ENCODE measurements at regions of chr19 and their contacts with region 1.

Region 1: DNA sequence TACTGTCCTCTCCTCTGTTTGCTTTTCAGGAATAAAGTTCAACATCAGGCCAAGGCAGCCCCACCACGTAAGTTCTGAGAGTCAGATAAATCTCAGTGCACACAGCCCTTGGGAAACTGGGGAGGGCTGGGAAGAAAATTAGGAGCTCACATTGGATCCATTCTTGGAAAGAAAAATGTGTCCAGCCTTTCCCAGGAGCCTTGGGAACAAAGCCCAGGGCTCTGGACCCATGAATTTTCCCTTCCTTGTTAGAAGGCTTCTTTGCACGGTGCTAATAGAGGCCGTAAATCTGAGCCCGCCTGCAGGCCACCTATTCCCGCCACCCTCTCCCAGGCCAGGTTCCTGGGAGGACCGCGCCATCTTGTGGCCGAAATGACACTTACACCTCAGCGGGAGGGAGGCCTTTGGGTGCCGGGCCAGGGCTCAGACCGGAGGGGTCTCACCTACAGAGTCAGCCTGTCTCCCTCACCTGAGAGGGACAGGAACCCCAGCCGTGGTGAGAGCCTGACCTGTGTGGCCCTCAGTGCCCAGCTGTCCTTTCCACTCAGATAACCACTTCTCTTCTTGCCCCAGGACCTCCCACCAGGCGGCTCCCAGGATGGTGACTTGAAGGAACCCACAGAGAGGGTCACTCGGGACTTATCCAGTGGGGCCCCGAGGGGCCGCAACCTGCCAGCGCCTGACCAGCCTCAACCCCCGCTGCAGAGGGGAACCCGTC is 25.1 kb upstream of the KCTD15 start:
- DNase-seq: peak; percentile 70 to 81 (median 75)
- ATAC-seq: peak; percentile 76
- H3K4me3 ChIP-seq: no peak overlapping the region
- H3K27ac ChIP-seq: no peak overlapping the region
- H3K4me1 ChIP-seq: no peaks in the 10 kb centered on the region
- H3K27me3 ChIP-seq: no peaks in the 10 kb centered on the region
- CTCF ChIP-seq: peak; percentile 71 to 93 (median 85)
- POLR2A ChIP-seq: no peak

Region 2: GRCh38 chr19:33235269-33235995 is 536.1 kb before region 1 on chr19:
- intact Hi-C with region 1: loop called (anchors 10 kb)
- DNase-seq: peak; percentile 78 to 90 (median 83)
- ATAC-seq: peak; percentile 71
- H3K4me3 ChIP-seq: no peak overlapping the region
- H3K27ac ChIP-seq: no peak overlapping the region
- H3K4me1 ChIP-seq: no peaks in the 10 kb centered on the region
- H3K27me3 ChIP-seq: no peaks in the 10 kb centered on the region
- CTCF ChIP-seq: peak; percentile 80 to 87 (median 85)
- POLR2A ChIP-seq: no peak

Region 3: GRCh38 chr19:33416307-33417215 is 355.0 kb before region 1 on chr19:
- intact Hi-C with region 1: loop called (anchors 5 kb)
- DNase-seq: peak; percentile 45 to 79 (median 60)
- ATAC-seq: peak; percentile 53
- H3K4me3 ChIP-seq: no peak overlapping the region
- H3K27ac ChIP-seq: no peak overlapping the region
- H3K4me1 ChIP-seq: no peaks in the 10 kb centered on the region
- H3K27me3 ChIP-seq: no peaks in the 10 kb centered on the region
- CTCF ChIP-seq: peak; percentile 38 to 56 (median 47)
- POLR2A ChIP-seq: no peak

Region 4: GRCh38 chr19:33430674-33431277 is 340.8 kb before region 1 on chr19:
- intact Hi-C with region 1: loop called (anchors 5 kb)
- DNase-seq: peak; percentile 65 to 74 (median 70)
- ATAC-seq: peak; percentile 80
- H3K4me3 ChIP-seq: no peak overlapping the region
- H3K27ac ChIP-seq: no peak overlapping the region
- H3K4me1 ChIP-seq: no peaks in the 10 kb centered on the region
- H3K27me3 ChIP-seq: no peaks in the 10 kb centered on the region
- CTCF ChIP-seq: peak; percentile 63 to 74 (median 67)
- POLR2A ChIP-seq: no peak

Region 5: DNA sequence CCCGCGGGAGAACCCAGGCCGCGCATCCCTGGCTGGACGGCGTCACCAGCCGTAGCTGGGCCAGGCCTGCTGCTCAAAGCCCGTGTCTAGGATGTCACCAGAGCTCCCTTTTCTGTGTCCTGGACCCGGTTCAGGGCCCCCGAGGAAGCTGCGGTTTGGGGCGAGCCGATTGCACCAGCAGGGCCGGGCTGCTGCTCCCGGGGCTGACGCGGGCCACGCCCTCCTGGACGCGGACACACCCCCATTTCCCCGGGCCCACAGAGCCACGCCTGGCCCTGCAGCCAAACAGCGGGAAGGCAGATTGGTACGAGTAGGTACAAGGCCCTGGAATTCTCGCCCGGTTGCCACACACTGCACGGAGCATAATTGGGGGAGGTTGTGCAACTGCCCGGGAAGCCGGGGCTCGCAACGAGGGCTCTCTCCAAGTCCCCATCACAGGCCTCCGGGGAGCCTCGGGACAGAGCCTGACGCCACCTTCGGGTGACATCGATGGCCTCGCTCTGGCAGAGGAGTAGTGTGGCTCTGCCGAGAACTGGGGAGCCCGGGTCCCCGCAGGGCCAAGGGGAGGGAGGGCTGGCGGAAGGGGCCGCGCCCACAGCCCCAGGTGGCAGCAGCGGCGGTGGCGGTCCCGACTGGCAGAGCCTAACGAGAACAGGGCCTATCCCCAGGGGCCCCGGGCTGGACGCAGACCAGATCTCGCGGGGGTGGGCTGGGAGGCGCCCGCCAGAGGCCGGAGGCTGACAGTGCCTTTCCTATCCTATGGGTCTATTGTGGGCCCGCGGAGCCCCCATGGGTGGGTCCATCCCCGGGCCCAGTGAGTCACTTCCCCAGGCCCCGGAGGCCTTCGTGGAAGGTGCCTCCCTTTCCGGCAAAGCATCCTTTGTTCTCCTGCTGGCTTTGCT is 48.6 kb after region 1 on chr19:
- intact Hi-C with region 1: no loop called
- DNase-seq: peak; percentile 67 to 79 (median 76)
- ATAC-seq: peak; percentile 79
- H3K4me3 ChIP-seq: no peak overlapping the region
- H3K27ac ChIP-seq: peak overlapping the region in 3 of 4 donors; percentile 1 to 53 (median 51)
- H3K4me1 ChIP-seq: peaks cover 14% of the 10 kb centered on the region
- H3K27me3 ChIP-seq: no peaks in the 10 kb centered on the region
- CTCF ChIP-seq: peak in 2 of 7 experiments; percentile 2 to 4
- POLR2A ChIP-seq: peak in 1 of 3 donors; percentile 23